B cell (primary cell): ENCODE measurements at regions of chr17 and their contacts with region 1.

Region 1: DNA sequence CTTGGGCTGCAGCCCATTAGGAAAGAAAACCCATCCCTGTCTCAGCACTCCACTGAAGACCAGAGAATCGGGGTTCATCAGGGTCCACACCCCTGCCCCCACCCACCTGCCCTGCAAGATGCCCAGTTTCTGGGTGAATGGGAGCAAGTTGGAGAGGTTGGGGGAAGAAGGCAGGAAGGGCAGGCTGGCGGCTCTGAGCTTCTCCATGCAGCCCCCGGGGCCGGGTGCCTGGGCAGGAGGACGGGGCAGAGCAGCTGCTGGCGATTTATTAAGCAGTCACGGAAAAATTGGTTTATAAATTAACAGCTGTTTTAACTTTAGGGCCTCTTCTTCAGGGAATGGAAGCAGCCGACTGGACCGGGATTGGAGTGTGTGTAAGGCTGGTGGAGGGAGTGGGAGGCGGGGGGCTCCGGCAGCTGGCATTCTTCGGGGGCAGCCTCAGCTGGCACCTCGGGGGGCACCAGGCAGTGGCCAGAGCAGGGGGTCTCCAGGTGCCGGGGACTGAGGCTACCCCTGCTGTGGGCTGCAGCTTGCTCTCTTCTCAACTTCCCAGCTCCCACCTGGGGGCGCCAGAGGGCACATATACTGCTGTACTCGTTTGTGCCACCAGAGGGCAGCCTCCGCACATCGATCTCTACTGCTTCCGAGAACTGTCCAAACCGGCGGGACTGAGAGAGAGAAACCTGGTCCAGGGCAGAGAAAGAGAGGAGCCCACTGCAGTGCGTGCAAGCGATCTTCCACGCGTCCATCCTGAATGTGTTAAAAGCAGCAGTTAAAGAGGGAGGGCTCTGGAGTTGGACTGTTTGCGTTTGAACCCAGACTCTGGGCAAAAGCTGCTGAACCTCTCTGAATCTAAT is 5.0 kb upstream of the PPP1R1B start:
- DNase-seq: peak; percentile 92
- ATAC-seq: peak; percentile 76
- H3K4me3 ChIP-seq: peak overlapping the region in 4 of 5 experiments; percentile 14 to 38 (median 29)
- H3K4me3 Mint-ChIP-seq: peak overlapping the region; percentile 84
- H3K27ac ChIP-seq: no peak overlapping the region
- H3K27ac Mint-ChIP-seq: peak overlapping the region; percentile 75
- H3K4me1 ChIP-seq: peaks cover 31 to 51% of the 10 kb centered on the region in 2 donors
- H3K4me1 Mint-ChIP-seq: peaks cover 32% of the 10 kb centered on the region
- H3K27me3 ChIP-seq: peaks cover 0 to 29% (median 9%) of the 10 kb centered on the region in 4 experiments
- H3K27me3 Mint-ChIP-seq: peaks cover 7% of the 10 kb centered on the region
- CTCF ChIP-seq: peak; percentile 100

Region 2: DNA sequence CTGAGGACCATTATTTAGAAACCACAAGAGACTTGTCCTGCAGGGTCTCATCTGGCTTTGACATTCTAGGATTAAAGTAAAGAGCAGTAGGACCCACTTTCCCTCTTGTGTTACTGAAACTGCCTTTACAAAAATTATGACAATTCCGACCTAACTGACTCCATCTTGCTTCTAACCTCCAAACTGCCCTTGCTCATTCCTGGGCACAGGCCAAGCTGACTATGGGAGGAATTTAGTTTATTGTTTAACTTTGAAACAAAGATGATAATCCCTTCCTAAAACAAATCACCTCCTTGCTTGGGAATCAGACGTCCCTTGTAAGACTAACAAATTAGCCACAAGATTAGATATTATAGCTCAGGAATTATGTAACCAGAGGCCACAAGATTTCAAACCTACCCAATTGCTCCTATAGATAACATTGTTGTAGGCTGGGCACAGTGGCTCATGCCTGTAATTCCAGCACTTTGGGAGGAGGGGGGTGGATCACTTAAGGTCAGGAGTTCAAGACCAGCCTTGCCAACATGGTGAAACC is 567.6 kb before region 1 on chr17:
- CTCF ChIA-PET with region 1: no interaction called
- POLR2A ChIA-PET with region 1: no interaction called
- intact Hi-C with region 1: no loop called
- DNase-seq: no peak
- ATAC-seq: no peak
- H3K4me3 ChIP-seq: no peak overlapping the region
- H3K4me3 Mint-ChIP-seq: no peak overlapping the region
- H3K27ac ChIP-seq: no peak overlapping the region
- H3K27ac Mint-ChIP-seq: no peak overlapping the region
- H3K4me1 ChIP-seq: peaks cover 7 to 13% of the 10 kb centered on the region in 2 donors
- H3K4me1 Mint-ChIP-seq: peaks cover 8% of the 10 kb centered on the region
- H3K27me3 ChIP-seq: peaks cover 0 to 3% (median 0%) of the 10 kb centered on the region in 4 experiments
- H3K27me3 Mint-ChIP-seq: peaks cover 22% of the 10 kb centered on the region
- CTCF ChIP-seq: no peak

Region 3: DNA sequence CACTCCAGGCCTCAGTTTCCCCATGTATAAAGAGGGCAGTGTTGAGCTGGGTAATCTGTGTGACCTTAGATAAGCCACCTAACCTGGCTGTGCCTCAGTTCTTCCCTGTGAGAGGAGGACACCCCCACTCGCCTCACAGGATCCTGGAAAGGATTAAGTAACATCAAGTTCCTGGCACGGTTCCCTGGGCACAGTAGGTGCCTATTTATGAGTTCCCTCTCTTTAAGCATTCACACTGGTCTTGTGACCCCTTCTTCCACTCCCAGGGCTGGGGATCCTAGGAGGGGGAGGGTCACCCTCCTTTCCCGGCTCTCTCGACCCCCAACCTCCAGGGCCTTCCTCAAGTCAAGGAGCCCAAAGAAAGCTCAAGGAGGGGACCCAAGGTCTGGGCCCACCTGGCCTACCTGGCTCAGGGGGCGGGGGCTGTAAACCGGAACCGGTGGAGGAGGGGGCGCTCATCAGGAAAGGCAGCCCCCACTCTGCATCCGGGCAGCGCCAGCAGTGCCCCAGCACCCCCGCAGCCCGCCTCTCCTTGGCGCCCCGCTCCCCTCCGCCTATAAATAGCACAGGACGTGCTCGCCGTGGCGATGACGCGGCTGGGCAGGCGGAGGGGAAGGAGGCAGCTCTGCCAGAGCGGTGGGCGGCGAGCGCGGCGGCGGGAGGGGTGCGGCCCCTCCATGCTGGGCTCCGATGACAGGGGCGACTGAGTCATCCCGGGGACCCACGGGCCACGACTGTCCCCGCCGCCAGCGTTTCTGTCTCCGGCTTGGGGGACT is 412.2 kb before region 1 on chr17:
- CTCF ChIA-PET with region 1: interaction called, 4 read pairs
- POLR2A ChIA-PET with region 1: no interaction called
- intact Hi-C with region 1: loop called (anchors 2 kb)
- DNase-seq: peak; percentile 65
- ATAC-seq: peak; percentile 40
- H3K4me3 ChIP-seq: peak overlapping the region in 4 of 5 experiments; percentile 35 to 52 (median 48)
- H3K4me3 Mint-ChIP-seq: peak overlapping the region; percentile 77
- H3K27ac ChIP-seq: no peak overlapping the region
- H3K27ac Mint-ChIP-seq: peak overlapping the region; percentile 68
- H3K4me1 ChIP-seq: peaks cover 32 to 39% of the 10 kb centered on the region in 2 donors
- H3K4me1 Mint-ChIP-seq: peaks cover 33% of the 10 kb centered on the region
- H3K27me3 ChIP-seq: peaks cover 0 to 12% (median 3%) of the 10 kb centered on the region in 4 experiments
- H3K27me3 Mint-ChIP-seq: no peaks in the 10 kb centered on the region
- CTCF ChIP-seq: no peak

Region 4: DNA sequence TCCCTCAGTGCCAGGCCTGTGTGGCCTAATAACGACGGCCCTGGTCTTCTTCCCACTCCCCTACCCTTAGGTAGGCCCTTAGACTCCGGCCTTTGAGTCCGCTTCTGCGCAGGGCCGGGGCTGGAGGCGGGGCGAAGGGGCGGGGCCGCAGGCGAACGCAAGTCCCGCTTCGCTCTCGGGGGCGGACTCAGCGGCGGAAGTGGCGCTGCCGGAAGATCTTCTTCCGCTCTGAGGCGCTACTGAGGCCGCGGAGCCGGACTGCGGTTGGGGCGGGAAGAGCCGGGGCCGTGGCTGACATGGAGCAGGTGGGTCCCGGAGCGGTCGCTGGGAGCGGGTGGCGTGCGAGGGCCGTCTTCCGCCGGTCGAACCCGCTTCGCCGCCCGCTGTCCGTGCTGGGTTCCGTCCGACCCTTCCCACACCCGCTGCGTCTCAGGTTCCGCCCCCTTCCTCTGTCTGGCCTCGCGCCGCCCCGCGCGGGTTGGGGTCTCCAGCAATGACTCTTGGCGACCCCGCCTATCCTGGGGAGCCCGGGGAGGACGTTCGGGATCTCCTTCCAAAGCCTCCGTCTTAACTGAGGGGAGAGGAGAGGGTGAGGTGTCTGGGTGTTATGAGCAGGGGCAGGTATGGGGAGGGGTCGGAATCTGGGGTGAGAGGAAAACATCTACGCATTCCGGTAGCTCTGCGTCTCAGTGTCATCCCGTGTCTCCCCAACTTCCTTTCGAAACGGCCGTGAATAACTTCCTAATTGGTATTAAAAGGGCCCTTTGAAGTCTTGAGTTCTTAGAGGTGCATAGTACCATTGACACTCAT is 15.4 kb after region 1 on chr17 and contains the start of gene STARD3:
- CTCF ChIA-PET with region 1: interaction called, 143 read pairs
- POLR2A ChIA-PET with region 1: interaction called, 3 read pairs
- intact Hi-C with region 1: loop called (anchors 1 kb)
- DNase-seq: peak; percentile 93
- ATAC-seq: peak; percentile 92
- H3K4me3 ChIP-seq: peak within 1 kb of the TSS; percentile 76 to 94 (median 82)
- H3K4me3 Mint-ChIP-seq: peak within 1 kb of the TSS; percentile 95
- H3K27ac ChIP-seq: peak within 1 kb of the TSS; percentile 89 to 90
- H3K27ac Mint-ChIP-seq: peak within 1 kb of the TSS; percentile 91
- H3K4me1 ChIP-seq: peaks cover 49 to 63% of the 10 kb centered on the region in 2 donors
- H3K4me1 Mint-ChIP-seq: peaks cover 60% of the 10 kb centered on the region
- H3K27me3 ChIP-seq: peaks cover 0 to 3% (median 0%) of the 10 kb centered on the region in 4 experiments
- H3K27me3 Mint-ChIP-seq: no peaks in the 10 kb centered on the region
- CTCF ChIP-seq: no peak
- total RNA-seq, gene STARD3: 93.1 and 101 TPM in 2 replicates

Region 5: DNA sequence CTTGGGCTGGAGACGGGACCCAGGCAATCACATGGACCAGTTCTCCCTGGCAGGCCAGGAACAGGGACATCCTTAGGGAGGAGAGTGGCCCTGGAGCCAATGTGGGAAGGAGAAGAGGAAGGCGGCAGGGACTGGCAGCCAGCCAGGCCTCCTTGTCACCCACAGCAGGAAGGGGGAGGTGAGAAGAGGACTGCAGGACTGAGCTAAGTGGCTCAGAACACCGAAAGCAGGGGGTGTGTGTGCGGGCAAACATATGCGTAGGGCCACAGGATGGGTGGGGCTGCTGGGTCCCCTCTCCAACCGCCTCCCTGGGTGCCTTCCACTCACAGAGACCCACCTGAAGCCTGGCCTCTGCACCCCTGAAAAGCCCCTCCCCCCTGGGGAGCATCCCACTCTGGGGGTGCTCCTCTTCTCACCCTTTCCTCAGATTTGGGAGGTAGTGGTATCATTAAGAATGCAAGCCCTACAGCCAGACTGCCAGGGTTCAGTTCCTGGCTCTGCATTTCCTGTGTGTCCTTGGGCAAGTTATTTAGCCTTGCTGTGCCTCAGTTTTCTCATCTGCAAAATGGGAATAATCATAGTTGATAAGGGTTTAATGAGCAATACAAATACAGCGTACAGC is 54.6 kb after region 1 on chr17:
- CTCF ChIA-PET with region 1: interaction called, 109 read pairs
- POLR2A ChIA-PET with region 1: no interaction called
- intact Hi-C with region 1: no loop called
- DNase-seq: peak; percentile 69
- ATAC-seq: peak; percentile 61
- H3K4me3 ChIP-seq: no peak overlapping the region
- H3K4me3 Mint-ChIP-seq: peak overlapping the region; percentile 68
- H3K27ac ChIP-seq: peak overlapping the region; percentile 65 to 94
- H3K27ac Mint-ChIP-seq: peak overlapping the region; percentile 98
- H3K4me1 ChIP-seq: peaks cover 79 to 96% of the 10 kb centered on the region in 2 donors
- H3K4me1 Mint-ChIP-seq: peaks cover 85% of the 10 kb centered on the region
- H3K27me3 ChIP-seq: peaks cover 0 to 3% (median 0%) of the 10 kb centered on the region in 4 experiments
- H3K27me3 Mint-ChIP-seq: no peaks in the 10 kb centered on the region
- CTCF ChIP-seq: no peak

Region 6: GRCh38 chr17:39794249-39794970 is 172.7 kb after region 1 on chr17:
- CTCF ChIA-PET with region 1: interaction called, 12 read pairs
- POLR2A ChIA-PET with region 1: no interaction called
- intact Hi-C with region 1: no loop called
- DNase-seq: peak; percentile 89
- ATAC-seq: peak; percentile 95
- H3K4me3 ChIP-seq: peak overlapping the region in 1 of 5 experiments; percentile 30
- H3K4me3 Mint-ChIP-seq: peak overlapping the region; percentile 69
- H3K27ac ChIP-seq: peak overlapping the region; percentile 70 to 86
- H3K27ac Mint-ChIP-seq: peak overlapping the region; percentile 91
- H3K4me1 ChIP-seq: peaks cover 81 to 86% of the 10 kb centered on the region in 2 donors
- H3K4me1 Mint-ChIP-seq: peaks cover 72% of the 10 kb centered on the region
- H3K27me3 ChIP-seq: no peaks in the 10 kb centered on the region
- H3K27me3 Mint-ChIP-seq: no peaks in the 10 kb centered on the region
- CTCF ChIP-seq: no peak

Region 7: DNA sequence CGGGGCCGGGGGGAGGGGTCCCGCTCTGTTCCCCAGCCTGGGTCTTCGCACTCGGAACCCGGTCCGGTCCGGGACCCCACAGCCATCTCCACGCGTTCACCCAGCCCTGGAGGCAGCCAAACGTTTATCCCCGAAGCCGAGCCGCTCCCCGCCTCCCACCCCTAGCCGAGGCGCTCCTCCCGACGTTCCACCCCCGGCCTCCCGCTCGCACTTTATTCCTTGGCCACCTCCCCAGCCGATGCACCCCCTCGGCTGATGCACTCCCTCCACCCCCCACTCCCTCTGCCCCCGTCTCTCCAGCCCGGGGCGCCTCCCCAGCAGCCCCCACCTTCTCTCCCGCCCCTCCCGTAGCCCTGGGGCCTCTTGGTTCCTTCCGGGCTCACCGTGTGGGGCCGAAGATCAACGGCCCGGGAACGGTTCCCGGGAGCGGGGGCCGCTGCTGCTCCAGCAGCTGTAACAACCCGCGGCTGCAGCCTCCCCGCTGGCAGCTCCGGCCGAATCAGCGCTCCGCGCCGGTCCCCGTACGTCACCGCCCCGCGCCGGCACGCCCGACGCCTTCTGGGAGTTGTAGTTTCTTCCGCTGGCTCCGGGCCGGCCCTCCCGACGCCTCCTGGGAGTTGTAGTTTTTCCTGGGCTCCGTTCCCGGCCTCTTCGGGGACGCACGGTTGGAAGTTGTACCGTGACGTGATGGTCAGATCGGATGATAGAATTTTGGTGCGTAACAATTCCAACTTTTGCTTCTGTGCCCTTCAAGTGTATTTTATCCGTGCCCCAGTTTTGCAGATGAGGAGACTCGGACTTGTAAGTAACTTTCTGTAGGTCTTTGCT is 305.6 kb after region 1 on chr17 and contains the starts of genes LRRC3C and ORMDL3:
- CTCF ChIA-PET with region 1: interaction called, 3 read pairs
- POLR2A ChIA-PET with region 1: no interaction called
- intact Hi-C with region 1: loop called (anchors 2 kb)
- DNase-seq: peak; percentile 93
- ATAC-seq: peak; percentile 96
- H3K4me3 ChIP-seq: peak within 1 kb of the TSS; percentile 66 to 93 (median 79)
- H3K4me3 Mint-ChIP-seq: peak within 1 kb of the TSS; percentile 92
- H3K27ac ChIP-seq: peak within 1 kb of the TSS; percentile 46 to 73
- H3K27ac Mint-ChIP-seq: peak within 1 kb of the TSS; percentile 87
- H3K4me1 ChIP-seq: peaks cover 33 to 34% of the 10 kb centered on the region in 2 donors
- H3K4me1 Mint-ChIP-seq: peaks cover 36% of the 10 kb centered on the region
- H3K27me3 ChIP-seq: no peaks in the 10 kb centered on the region
- H3K27me3 Mint-ChIP-seq: no peaks in the 10 kb centered on the region
- CTCF ChIP-seq: no peak
- total RNA-seq, gene LRRC3C: not detected in 2 replicates
- total RNA-seq, gene ORMDL3: 43.4 and 51.8 TPM in 2 replicates